CD8-positive, alpha-beta T cell (primary cell): ENCODE measurements at regions of chr10 and their contacts with region 1.

Region 1: GRCh38 chr10:72297968-72298773 is 24.4 kb downstream of the DDIT4 start:
- DNase-seq: peak; percentile 68 to 96 (median 83)
- ATAC-seq: peak; percentile 58
- H3K4me3 ChIP-seq: peak overlapping the region; percentile 53 to 57
- H3K4me3 Mint-ChIP-seq: peak overlapping the region; percentile 72
- H3K27ac ChIP-seq: peak overlapping the region; percentile 70 to 96
- H3K27ac Mint-ChIP-seq: peak overlapping the region; percentile 80
- H3K4me1 ChIP-seq: peaks cover 38% of the 10 kb centered on the region
- H3K4me1 Mint-ChIP-seq: peaks cover 41% of the 10 kb centered on the region
- H3K27me3 ChIP-seq: no peaks in the 10 kb centered on the region
- H3K27me3 Mint-ChIP-seq: no peaks in the 10 kb centered on the region
- CTCF ChIP-seq: no peak

Region 2: GRCh38 chr10:72260588-72261322 is 37.4 kb before region 1 on chr10:
- CTCF ChIA-PET with region 1: no interaction called
- POLR2A ChIA-PET with region 1: interaction called, 4 read pairs
- intact Hi-C with region 1: loop called (anchors 1 to 2 kb)
- DNase-seq: peak; percentile 61 to 94 (median 84)
- ATAC-seq: peak; percentile 77
- H3K4me3 ChIP-seq: peak overlapping the region; percentile 56 to 69
- H3K4me3 Mint-ChIP-seq: peak overlapping the region; percentile 81
- H3K27ac ChIP-seq: peak overlapping the region; percentile 51 to 83
- H3K27ac Mint-ChIP-seq: peak overlapping the region; percentile 97
- H3K4me1 ChIP-seq: peaks cover 69% of the 10 kb centered on the region
- H3K4me1 Mint-ChIP-seq: peaks cover 69% of the 10 kb centered on the region
- H3K27me3 ChIP-seq: no peaks in the 10 kb centered on the region
- H3K27me3 Mint-ChIP-seq: no peaks in the 10 kb centered on the region
- CTCF ChIP-seq: no peak

Region 3: DNA sequence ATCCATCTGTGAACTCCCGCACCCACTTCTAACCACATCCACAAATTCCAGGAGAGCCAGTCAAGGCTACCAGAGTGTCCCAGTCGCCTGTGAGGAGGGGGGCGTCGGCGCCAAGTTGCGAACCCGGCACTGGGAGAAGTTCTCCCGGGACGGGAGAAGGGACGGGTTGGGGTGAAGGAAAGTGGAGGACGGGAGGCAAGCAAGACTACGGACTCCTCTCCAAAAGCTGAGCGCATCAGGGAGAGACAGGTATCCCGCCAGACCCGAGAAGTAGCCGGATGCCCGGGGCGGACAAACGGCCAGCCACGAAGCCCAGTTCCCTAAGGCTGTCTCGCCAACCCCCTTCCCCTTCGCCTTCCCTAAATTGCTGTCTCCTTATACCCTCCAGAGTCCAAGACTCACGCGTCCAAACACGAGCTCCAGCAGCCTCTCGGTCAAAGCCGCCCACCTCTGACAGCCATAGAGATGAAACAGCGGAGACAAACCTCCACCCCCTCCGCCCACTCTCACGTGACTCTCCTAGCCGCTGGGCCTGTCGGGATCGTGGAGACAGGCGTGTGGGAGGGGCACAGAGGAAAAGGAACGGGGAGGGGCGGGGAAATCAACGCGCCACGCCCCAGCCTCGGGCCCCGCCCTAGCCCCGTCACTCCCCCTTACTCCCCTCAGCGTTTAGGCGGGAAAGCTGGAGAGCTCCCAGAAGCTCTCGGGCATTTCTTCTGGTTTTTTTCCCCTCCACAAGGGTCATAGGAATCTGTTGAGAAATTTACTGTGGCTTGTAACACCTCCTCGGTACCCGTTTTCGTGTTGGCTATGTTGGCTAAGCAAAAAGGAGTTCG is 327.7 kb after region 1 on chr10 and contains the start of gene MICU1:
- CTCF ChIA-PET with region 1: no interaction called
- POLR2A ChIA-PET with region 1: no interaction called
- intact Hi-C with region 1: no loop called
- DNase-seq: peak; percentile 84 to 97 (median 93)
- ATAC-seq: peak; percentile 99
- H3K4me3 ChIP-seq: peak within 1 kb of the TSS; percentile 91 to 99
- H3K4me3 Mint-ChIP-seq: peak within 1 kb of the TSS; percentile 98
- H3K27ac ChIP-seq: peak within 1 kb of the TSS; percentile 63 to 64
- H3K27ac Mint-ChIP-seq: peak within 1 kb of the TSS; percentile 92
- H3K4me1 ChIP-seq: peaks cover 11% of the 10 kb centered on the region
- H3K4me1 Mint-ChIP-seq: peaks cover 23% of the 10 kb centered on the region
- H3K27me3 ChIP-seq: no peaks in the 10 kb centered on the region
- H3K27me3 Mint-ChIP-seq: no peaks in the 10 kb centered on the region
- CTCF ChIP-seq: no peak
- total RNA-seq, gene MICU1: 8.2 to 11.3 TPM